ENCODE measurements at regions of chr16 and their contacts with region 1.

Region 1: DNA sequence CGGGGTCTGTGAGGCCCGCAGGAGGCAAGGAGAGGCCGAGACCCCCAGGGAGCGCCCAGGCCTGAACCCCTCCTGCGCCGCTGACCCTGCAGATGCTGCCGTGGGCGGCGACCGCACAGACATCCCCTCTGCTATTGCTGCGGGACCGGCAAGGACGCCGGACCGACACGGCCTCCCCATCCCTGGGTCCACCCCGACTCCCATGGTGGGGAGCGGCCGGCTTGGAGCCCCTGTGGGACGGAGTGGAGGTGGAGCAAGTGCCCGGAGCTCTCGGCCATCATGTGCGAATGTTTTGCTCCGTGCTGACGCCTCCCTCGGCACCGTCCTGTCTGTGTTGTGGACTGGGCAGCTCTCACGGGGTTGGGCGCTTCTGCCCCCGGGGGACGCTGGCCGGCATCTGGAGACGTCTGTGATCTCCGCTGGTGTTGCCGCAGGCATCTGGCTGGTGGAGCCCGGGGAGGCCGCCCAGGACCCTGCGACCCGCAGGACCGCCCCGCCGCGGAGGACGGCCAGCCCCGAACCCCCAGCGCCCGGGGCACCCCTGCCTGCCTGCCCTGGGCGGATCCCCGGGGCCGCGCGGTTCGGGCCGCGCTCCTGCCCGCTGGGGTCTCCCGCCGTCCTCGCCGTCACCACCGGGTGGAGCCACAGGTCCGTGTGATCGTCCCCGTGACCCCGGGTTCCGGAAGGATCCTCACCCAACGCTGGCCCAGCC is 12.8 kb upstream of the GNG13 start:
- DNase-seq: peak in 8 of 9 experiments; percentile 22 to 72 (median 58)
- ATAC-seq: peak; percentile 87
- H3K4me3 ChIP-seq: no peak overlapping the region
- H3K4me3 Mint-ChIP-seq: no peak overlapping the region
- H3K27ac ChIP-seq: no peak overlapping the region
- H3K27ac Mint-ChIP-seq: no peak overlapping the region
- H3K4me1 ChIP-seq: peaks cover 13% of the 10 kb centered on the region
- H3K4me1 Mint-ChIP-seq: peaks cover 9% of the 10 kb centered on the region
- H3K27me3 ChIP-seq: peaks cover 5 to 30% of the 10 kb centered on the region in 2 experiments
- H3K27me3 Mint-ChIP-seq: peaks cover 17% of the 10 kb centered on the region
- CTCF ChIP-seq: peak; percentile 65

Region 2: GRCh38 chr16:877991-878784 is 64.8 kb after region 1 on chr16:
- CTCF ChIA-PET with region 1: no interaction called
- POLR2A ChIA-PET with region 1: no interaction called
- intact Hi-C with region 1: no loop called
- DNase-seq: peak in 2 of 9 experiments; percentile 39 to 51
- ATAC-seq: no peak
- H3K4me3 ChIP-seq: no peak overlapping the region
- H3K4me3 Mint-ChIP-seq: no peak overlapping the region
- H3K27ac ChIP-seq: no peak overlapping the region
- H3K27ac Mint-ChIP-seq: no peak overlapping the region
- H3K4me1 ChIP-seq: no peaks in the 10 kb centered on the region
- H3K4me1 Mint-ChIP-seq: no peaks in the 10 kb centered on the region
- H3K27me3 ChIP-seq: no peaks in the 10 kb centered on the region
- H3K27me3 Mint-ChIP-seq: no peaks in the 10 kb centered on the region
- CTCF ChIP-seq: no peak

Region 3: GRCh38 chr16:1054660-1055556 is 241.5 kb after region 1 on chr16:
- CTCF ChIA-PET with region 1: interaction called, 4 read pairs
- POLR2A ChIA-PET with region 1: no interaction called
- intact Hi-C with region 1: loop called in 1 of 2 experiments (anchors 1 kb)
- DNase-seq: peak in 6 of 9 experiments; percentile 24 to 68 (median 38)
- ATAC-seq: no peak
- H3K4me3 ChIP-seq: no peak overlapping the region
- H3K4me3 Mint-ChIP-seq: no peak overlapping the region
- H3K27ac ChIP-seq: no peak overlapping the region
- H3K27ac Mint-ChIP-seq: no peak overlapping the region
- H3K4me1 ChIP-seq: peaks cover 4% of the 10 kb centered on the region
- H3K4me1 Mint-ChIP-seq: no peaks in the 10 kb centered on the region
- H3K27me3 ChIP-seq: peaks cover 0 to 3% of the 10 kb centered on the region in 2 experiments
- H3K27me3 Mint-ChIP-seq: no peaks in the 10 kb centered on the region
- CTCF ChIP-seq: peak; percentile 44

Region 4: GRCh38 chr16:1105888-1106620 is 292.7 kb after region 1 on chr16:
- CTCF ChIA-PET with region 1: interaction called, 3 read pairs
- POLR2A ChIA-PET with region 1: no interaction called
- intact Hi-C with region 1: loop called in 1 of 2 experiments (anchors 1 kb)
- DNase-seq: peak in 8 of 9 experiments; percentile 9 to 58 (median 42)
- ATAC-seq: peak; percentile 53
- H3K4me3 ChIP-seq: no peak overlapping the region
- H3K4me3 Mint-ChIP-seq: no peak overlapping the region
- H3K27ac ChIP-seq: no peak overlapping the region
- H3K27ac Mint-ChIP-seq: no peak overlapping the region
- H3K4me1 ChIP-seq: no peaks in the 10 kb centered on the region
- H3K4me1 Mint-ChIP-seq: no peaks in the 10 kb centered on the region
- H3K27me3 ChIP-seq: peaks cover 9 to 15% of the 10 kb centered on the region in 2 experiments
- H3K27me3 Mint-ChIP-seq: peaks cover 8% of the 10 kb centered on the region
- CTCF ChIP-seq: peak; percentile 31